ENCODE measurements at regions of chr6 and their contacts with region 1.

Region 1: DNA sequence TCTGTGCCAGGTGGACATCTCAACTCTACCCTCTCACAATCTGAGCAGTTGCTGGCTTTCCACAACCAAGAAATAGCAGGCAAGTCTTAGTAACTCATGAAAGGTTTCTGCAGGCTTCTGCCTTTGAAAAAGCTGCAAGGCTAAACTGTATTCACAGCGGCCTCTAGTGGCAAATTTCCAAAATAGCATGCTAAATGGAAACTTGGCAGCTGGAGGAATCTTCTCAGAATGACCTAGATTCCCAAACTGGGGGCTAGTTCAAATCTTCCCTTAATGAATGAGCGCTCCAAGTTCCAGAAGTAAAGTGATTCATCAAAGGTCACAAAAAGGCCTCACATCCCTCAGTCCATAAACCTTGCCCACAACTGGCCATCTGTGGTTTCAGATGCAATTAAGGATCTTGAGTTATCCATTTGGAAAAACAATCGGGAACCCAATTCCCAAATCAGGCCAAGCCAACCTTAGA is 11.9 kb upstream of the CPNE5 start:
- DNase-seq: peak in 1 of 2 donors; percentile 82
- H3K4me3 ChIP-seq: no peak overlapping the region
- H3K27ac ChIP-seq: peak overlapping the region; percentile 77 to 89
- H3K4me1 ChIP-seq: peaks cover 0 to 22% of the 10 kb centered on the region in 2 donors
- H3K27me3 ChIP-seq: no peaks in the 10 kb centered on the region
- CTCF ChIP-seq: peak; percentile 52 to 77 (median 72)

Region 2: GRCh38 chr6:36526066-36526465 is 325.1 kb before region 1 on chr6:
- intact Hi-C with region 1: no loop called
- DNase-seq: no peak
- H3K4me3 ChIP-seq: no peak overlapping the region
- H3K27ac ChIP-seq: no peak overlapping the region
- H3K4me1 ChIP-seq: no peaks in the 10 kb centered on the region
- H3K27me3 ChIP-seq: no peaks in the 10 kb centered on the region
- CTCF ChIP-seq: no peak

Region 3: GRCh38 chr6:36623547-36624459 is 227.4 kb before region 1 on chr6:
- intact Hi-C with region 1: loop called (anchors 5 kb)
- DNase-seq: peak; percentile 43 to 93
- H3K4me3 ChIP-seq: no peak overlapping the region
- H3K27ac ChIP-seq: no peak overlapping the region
- H3K4me1 ChIP-seq: peaks cover 18 to 46% of the 10 kb centered on the region in 2 donors
- H3K27me3 ChIP-seq: no peaks in the 10 kb centered on the region
- CTCF ChIP-seq: peak; percentile 82 to 96 (median 82)

Region 4: DNA sequence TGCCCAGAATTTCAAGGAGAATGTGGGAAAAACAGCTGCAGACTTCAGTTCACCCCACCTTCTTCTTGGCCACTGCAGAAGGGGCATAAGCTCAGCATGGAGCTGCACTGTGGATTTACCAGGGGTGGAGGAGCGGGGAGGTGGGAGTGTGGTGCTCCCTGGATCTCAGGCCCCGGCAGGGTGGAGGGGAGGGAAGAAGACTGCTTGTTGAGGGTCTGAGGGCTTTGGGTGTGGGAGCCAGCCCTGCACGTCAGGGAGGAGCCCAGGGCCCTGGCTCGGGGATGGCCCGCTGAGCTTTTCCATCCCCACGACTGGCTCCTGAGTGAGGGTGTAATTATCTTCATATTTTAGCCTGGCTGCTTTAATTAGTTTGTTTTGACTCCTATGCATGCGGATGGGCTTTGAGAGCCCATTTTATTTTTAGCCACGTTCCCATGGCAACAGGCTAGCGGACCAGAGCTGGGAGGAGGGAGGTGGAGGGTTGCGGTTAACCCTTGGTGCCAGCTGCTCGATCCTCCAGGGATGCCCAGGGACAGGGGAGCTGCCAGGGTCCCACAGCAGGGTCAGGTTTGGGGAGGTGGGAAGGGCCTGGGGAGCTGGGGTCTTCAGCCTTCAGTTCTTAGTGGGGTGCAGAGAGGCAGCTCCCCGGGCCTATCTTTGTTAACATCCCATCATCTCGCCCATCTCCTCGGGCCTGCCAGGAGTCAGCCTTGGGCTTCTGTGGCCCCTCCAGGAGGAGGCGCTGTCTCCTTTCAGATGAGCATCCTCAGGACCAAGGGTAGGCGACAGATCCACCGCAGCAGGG is 85.4 kb before region 1 on chr6:
- intact Hi-C with region 1: loop called (anchors 1 kb)
- DNase-seq: peak; percentile 33 to 89
- H3K4me3 ChIP-seq: no peak overlapping the region
- H3K27ac ChIP-seq: no peak overlapping the region
- H3K4me1 ChIP-seq: peaks cover 0 to 8% of the 10 kb centered on the region in 2 donors
- H3K27me3 ChIP-seq: no peaks in the 10 kb centered on the region
- CTCF ChIP-seq: peak; percentile 63 to 85 (median 82)

Region 5: GRCh38 chr6:36874443-36875249 is 23.5 kb after region 1 on chr6 and contains the start of gene PPIL1:
- intact Hi-C with region 1: loop called (anchors 2 kb)
- DNase-seq: peak; percentile 29 to 90
- H3K4me3 ChIP-seq: peak within 1 kb of the TSS; percentile 78 to 86
- H3K27ac ChIP-seq: peak within 1 kb of the TSS; percentile 91
- H3K4me1 ChIP-seq: peaks cover 4 to 9% of the 10 kb centered on the region in 2 donors
- H3K27me3 ChIP-seq: no peaks in the 10 kb centered on the region
- CTCF ChIP-seq: no peak
- total RNA-seq, gene PPIL1: 24.2 TPM